ENCODE measurements at regions of chr4 and their contacts with region 1.

Region 1: GRCh38 chr4:88284439-88285234 is at the start of gene PPM1K:
- DNase-seq: peak; percentile 100
- ATAC-seq: peak; percentile 88
- H3K4me3 Mint-ChIP-seq: peak within 1 kb of the TSS; percentile 96
- H3K27ac Mint-ChIP-seq: peak within 1 kb of the TSS; percentile 100
- H3K4me1 Mint-ChIP-seq: peaks cover 35% of the 10 kb centered on the region
- H3K27me3 Mint-ChIP-seq: no peaks in the 10 kb centered on the region
- total RNA-seq, gene PPM1K: 44.2 to 53.4 TPM

Region 2: GRCh38 chr4:86934771-86935565 is 1349.7 kb before region 1 on chr4 and contains the start of gene AFF1:
- CTCF ChIA-PET with region 1: no interaction called
- POLR2A ChIA-PET with region 1: no interaction called
- intact Hi-C with region 1: loop called in 1 of 2 experiments (anchors 2 kb)
- DNase-seq: peak; percentile 94
- ATAC-seq: peak; percentile 68
- H3K4me3 Mint-ChIP-seq: peak within 1 kb of the TSS; percentile 84
- H3K27ac Mint-ChIP-seq: peak within 1 kb of the TSS; percentile 97
- H3K4me1 Mint-ChIP-seq: peaks cover 40% of the 10 kb centered on the region
- H3K27me3 Mint-ChIP-seq: no peaks in the 10 kb centered on the region
- total RNA-seq, gene AFF1: 47.3 to 57.8 TPM

Region 3: GRCh38 chr4:87422104-87423052 is 862.3 kb before region 1 on chr4 and contains the start of gene NUDT9:
- CTCF ChIA-PET with region 1: no interaction called
- POLR2A ChIA-PET with region 1: no interaction called
- intact Hi-C with region 1: loop called in 1 of 2 experiments (anchors 2 kb)
- DNase-seq: peak; percentile 94
- ATAC-seq: peak; percentile 88
- H3K4me3 Mint-ChIP-seq: peak within 1 kb of the TSS; percentile 86
- H3K27ac Mint-ChIP-seq: peak within 1 kb of the TSS; percentile 99
- H3K4me1 Mint-ChIP-seq: peaks cover 33% of the 10 kb centered on the region
- H3K27me3 Mint-ChIP-seq: no peaks in the 10 kb centered on the region
- total RNA-seq, gene NUDT9: 9.8 to 13.3 TPM

Region 4: DNA sequence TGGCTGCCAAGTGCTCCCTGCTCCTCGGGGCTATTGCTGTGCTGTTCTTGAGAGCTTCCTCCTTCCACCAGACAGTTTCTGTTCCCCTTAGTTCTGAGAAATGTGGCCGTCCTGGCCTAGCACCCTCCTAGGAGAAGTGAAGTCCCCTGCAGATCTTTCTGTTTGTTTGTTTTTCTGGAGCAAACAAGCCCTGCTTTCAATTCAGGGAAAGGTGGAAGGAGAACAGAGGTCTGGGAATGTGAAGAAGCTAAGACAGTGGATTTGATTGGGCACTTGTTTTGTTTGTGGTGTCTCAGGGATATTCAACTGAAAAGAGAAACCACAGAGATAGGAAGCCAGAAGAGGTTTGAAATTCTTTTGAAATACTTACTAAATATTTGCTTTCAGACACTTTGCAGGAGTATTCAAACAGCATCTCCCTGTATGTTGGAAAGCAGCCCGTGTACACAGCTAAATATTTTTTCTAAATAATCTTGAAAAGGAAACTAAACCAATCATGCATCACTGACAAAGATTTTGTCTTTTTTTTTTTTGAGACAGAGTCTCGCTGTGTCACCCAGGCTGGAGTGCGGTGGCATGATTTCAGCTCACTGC is 36.2 kb after region 1 on chr4:
- CTCF ChIA-PET with region 1: no interaction called
- POLR2A ChIA-PET with region 1: interaction called, 3 read pairs
- intact Hi-C with region 1: loop called in 1 of 2 experiments (anchors 2 kb)
- DNase-seq: peak; percentile 40
- ATAC-seq: peak; percentile 82
- H3K4me3 Mint-ChIP-seq: peak overlapping the region; percentile 48
- H3K27ac Mint-ChIP-seq: peak overlapping the region; percentile 89
- H3K4me1 Mint-ChIP-seq: peaks cover 14% of the 10 kb centered on the region
- H3K27me3 Mint-ChIP-seq: no peaks in the 10 kb centered on the region

Region 5: GRCh38 chr4:88523325-88524129 is 238.9 kb after region 1 on chr4 and contains the start of gene PYURF:
- CTCF ChIA-PET with region 1: interaction called, 8 read pairs
- POLR2A ChIA-PET with region 1: no interaction called
- intact Hi-C with region 1: loop called (anchors 1 to 5 kb)
- DNase-seq: peak; percentile 88
- ATAC-seq: peak; percentile 87
- H3K4me3 Mint-ChIP-seq: peak within 1 kb of the TSS; percentile 92
- H3K27ac Mint-ChIP-seq: peak within 1 kb of the TSS; percentile 88
- H3K4me1 Mint-ChIP-seq: peaks cover 45% of the 10 kb centered on the region
- H3K27me3 Mint-ChIP-seq: no peaks in the 10 kb centered on the region
- total RNA-seq, gene PYURF: 27.3 to 44.1 TPM

Region 6: GRCh38 chr4:88803600-88804096 is 519.0 kb after region 1 on chr4:
- CTCF ChIA-PET with region 1: no interaction called
- POLR2A ChIA-PET with region 1: no interaction called
- intact Hi-C with region 1: loop called in 1 of 2 experiments (anchors 5 kb)
- DNase-seq: peak; percentile 35
- ATAC-seq: peak; percentile 63
- H3K4me3 Mint-ChIP-seq: no peak overlapping the region
- H3K27ac Mint-ChIP-seq: no peak overlapping the region
- H3K4me1 Mint-ChIP-seq: peaks cover 14% of the 10 kb centered on the region
- H3K27me3 Mint-ChIP-seq: peaks cover 5% of the 10 kb centered on the region

Region 7: GRCh38 chr4:89294573-89295269 is 1010.1 kb after region 1 on chr4:
- CTCF ChIA-PET with region 1: no interaction called
- POLR2A ChIA-PET with region 1: interaction called, 3 read pairs
- intact Hi-C with region 1: loop called in 1 of 2 experiments (anchors 10 kb)
- DNase-seq: no peak
- ATAC-seq: peak; percentile 66
- H3K4me3 Mint-ChIP-seq: peak overlapping the region; percentile 53
- H3K27ac Mint-ChIP-seq: peak overlapping the region; percentile 94
- H3K4me1 Mint-ChIP-seq: peaks cover 83% of the 10 kb centered on the region
- H3K27me3 Mint-ChIP-seq: no peaks in the 10 kb centered on the region